PC-3 (cell line): ENCODE measurements at regions of chr16 and their contacts with region 1.

Region 1: DNA sequence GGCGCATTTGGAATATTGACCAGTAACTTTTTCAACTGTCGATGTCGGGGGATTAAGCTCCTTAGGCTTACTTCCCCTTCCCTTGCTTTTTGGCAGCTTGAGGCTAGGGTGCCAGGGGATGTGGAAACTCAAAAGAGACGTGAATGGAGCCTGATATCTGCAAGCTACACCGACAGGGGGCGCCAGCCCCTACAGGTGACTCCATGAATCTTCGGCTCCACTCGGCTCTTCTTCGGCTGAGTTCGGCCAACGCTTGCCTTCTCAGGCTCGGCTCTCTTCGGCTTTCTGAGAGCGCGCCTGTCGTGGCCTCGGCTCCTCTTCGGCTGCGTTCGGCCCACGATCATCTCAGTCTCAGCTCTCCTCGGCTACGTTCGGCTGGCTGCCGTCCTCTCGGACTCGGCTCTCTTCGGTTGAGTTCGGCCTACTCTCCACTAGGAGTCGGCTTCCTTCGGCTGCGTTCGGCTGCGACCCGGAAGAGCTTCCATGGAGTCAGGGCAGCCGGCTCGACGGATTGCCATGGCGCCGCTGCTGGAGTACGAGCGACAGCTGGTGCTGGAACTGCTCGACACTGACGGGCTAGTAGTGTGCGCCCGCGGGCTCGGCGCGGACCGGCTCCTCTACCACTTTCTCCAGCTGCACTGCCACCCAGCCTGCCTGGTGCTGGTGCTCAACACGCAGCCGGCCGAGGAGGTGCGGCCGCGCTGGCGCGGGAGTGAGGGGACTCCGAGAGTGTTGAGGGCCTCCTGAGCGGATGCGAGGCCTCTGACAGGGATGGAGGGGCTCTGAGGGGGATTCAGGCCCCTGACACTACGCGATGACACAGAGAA is at the start of gene ERCC4:
- DNase-seq: peak; percentile 98
- ATAC-seq: peak; percentile 99
- H3K4me3 ChIP-seq: peak within 1 kb of the TSS; percentile 99
- H3K27ac ChIP-seq: no peak within 1 kb of the TSS
- H3K4me1 ChIP-seq: peaks cover 10% of the 10 kb centered on the region; the same call in 1 of the 2 replicates
- H3K27me3 ChIP-seq: no peaks in the 10 kb centered on the region
- CTCF ChIP-seq: peak; percentile 70
- total RNA-seq, gene ERCC4: 3.2 and 4.9 TPM in 2 replicates

Region 2: DNA sequence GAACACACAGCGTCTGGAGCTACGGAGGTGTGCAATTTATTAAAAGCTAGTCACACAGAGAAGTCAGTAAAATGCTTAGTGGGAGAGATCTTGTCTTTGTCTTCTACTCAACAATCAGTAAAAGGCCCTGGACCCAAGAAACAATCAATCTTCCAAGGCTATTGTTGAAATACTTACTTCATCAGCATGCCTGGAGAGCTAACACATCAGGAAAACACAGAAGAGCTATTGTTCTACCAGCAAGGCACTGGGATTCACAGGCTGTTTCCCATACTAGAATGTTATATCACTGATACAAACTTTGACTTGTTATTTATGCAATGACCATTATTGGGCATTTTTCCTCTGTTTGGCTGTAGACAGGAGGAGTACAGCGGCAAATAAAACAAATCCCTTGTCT is 247.7 kb before region 1 on chr16:
- CTCF ChIA-PET with region 1: no interaction called
- POLR2A ChIA-PET with region 1: no interaction called
- intact Hi-C with region 1: no loop called
- DNase-seq: no peak
- ATAC-seq: no peak
- H3K4me3 ChIP-seq: no peak overlapping the region
- H3K27ac ChIP-seq: no peak overlapping the region
- H3K4me1 ChIP-seq: no peaks in the 10 kb centered on the region
- H3K27me3 ChIP-seq: no peaks in the 10 kb centered on the region
- CTCF ChIP-seq: no peak

Region 3: DNA sequence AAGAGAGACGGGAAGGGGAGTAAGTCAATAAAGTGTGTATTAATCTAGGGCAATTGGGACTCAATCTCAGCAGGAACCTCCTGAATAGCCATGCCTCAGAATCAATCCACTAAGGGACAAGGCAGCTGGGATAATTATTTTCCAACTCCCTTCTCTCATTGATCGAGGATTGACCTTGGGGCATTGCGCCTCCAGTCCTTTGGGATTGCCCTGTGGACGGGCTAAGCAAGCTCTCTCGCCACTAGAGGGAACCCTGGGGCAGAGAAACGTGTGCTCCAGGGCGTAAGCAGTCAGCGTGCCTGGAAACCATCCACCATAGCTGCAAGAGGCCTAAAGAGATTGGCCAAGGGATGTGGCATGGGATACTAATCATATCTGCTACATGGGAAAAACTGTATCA is 53.8 kb before region 1 on chr16:
- CTCF ChIA-PET with region 1: interaction called, 7 read pairs
- POLR2A ChIA-PET with region 1: no interaction called
- intact Hi-C with region 1: loop called (anchors 2 kb)
- DNase-seq: peak; percentile 76
- ATAC-seq: peak; percentile 89
- H3K4me3 ChIP-seq: no peak overlapping the region
- H3K27ac ChIP-seq: no peak overlapping the region
- H3K4me1 ChIP-seq: no peaks in the 10 kb centered on the region
- H3K27me3 ChIP-seq: peaks cover 3% of the 10 kb centered on the region; the same call in 1 of the 2 replicates
- CTCF ChIP-seq: peak; percentile 68

Region 4: DNA sequence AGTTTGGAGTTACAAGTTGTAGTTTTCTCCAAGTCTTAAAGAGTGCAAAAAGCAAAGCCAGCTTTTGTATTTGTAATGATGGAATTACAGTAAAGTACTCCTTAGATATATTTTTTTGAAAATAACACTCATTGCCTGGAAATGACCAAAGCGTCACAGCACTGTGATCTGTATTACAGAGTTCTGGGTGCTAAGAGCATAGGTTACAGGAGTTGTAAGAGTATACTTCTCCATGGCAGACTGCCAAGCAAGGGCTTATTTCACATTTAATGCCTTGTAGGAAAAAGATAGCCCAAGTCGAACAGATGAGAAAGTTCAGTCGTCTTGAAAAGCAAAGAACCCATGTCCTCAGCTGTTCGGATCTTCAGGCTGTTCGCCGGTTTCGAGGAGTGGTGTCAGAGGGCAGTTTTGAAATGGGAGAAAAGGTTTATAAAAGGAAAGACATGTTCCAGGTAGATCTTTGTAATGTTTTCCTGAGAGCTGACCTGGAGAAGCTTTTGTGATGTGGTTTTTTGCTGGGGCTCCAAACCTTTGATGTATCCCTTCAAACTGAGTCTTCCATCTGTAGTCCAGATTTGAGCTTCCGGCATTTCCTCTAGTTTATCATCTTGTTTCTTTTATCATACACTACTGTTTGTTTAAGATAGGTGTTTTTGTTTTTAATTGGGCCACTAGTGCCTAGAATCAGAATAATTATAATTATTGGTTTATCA is 41.4 kb after region 1 on chr16:
- CTCF ChIA-PET with region 1: no interaction called
- POLR2A ChIA-PET with region 1: no interaction called
- intact Hi-C with region 1: no loop called
- DNase-seq: no peak
- ATAC-seq: no peak
- H3K4me3 ChIP-seq: no peak overlapping the region
- H3K27ac ChIP-seq: no peak overlapping the region
- H3K4me1 ChIP-seq: peaks cover 25% of the 10 kb centered on the region
- H3K27me3 ChIP-seq: no peaks in the 10 kb centered on the region
- CTCF ChIP-seq: no peak

Region 5: DNA sequence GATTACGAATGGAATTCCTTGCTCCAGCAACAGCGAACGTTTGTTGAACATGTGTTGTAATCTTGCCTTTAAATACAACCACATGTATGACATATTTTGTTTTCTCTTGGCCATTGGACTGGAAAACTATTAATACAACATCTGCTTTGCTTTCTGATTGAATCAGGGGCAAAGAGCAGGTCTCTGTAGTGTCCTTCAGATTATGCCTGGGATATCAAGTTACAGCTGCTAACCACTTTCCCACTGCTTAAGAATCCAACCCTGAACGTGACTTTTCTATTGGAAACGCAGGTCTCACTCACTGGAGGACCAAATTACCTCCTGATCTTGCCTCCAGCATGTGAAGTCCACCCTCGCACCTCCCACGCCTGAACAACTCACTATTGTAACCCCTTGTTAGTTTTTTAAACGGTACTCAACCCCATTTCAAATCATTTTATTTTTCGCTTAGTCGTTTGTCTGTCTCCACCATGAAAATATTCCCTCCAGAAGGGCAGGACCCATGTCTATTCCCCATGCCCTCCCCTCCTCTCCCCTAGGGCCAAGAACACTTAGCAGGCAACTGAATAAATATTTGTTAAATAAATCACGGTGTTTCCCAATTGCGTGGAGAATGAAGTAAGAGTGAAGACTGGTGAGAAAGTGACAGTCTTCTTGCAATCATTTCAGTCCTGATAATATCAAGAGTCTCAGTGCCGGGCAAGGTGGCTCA is 93.8 kb after region 1 on chr16:
- CTCF ChIA-PET with region 1: no interaction called
- POLR2A ChIA-PET with region 1: no interaction called
- intact Hi-C with region 1: loop called (anchors 10 kb)
- DNase-seq: peak; percentile 62
- ATAC-seq: peak; percentile 40
- H3K4me3 ChIP-seq: no peak overlapping the region
- H3K27ac ChIP-seq: peak overlapping the region; percentile 68
- H3K4me1 ChIP-seq: peaks cover 14% of the 10 kb centered on the region
- H3K27me3 ChIP-seq: no peaks in the 10 kb centered on the region
- CTCF ChIP-seq: no peak

Region 6: GRCh38 chr16:14029658-14030057 is 109.8 kb after region 1 on chr16:
- CTCF ChIA-PET with region 1: no interaction called
- POLR2A ChIA-PET with region 1: no interaction called
- intact Hi-C with region 1: no loop called
- DNase-seq: no peak
- ATAC-seq: no peak
- H3K4me3 ChIP-seq: no peak overlapping the region
- H3K27ac ChIP-seq: no peak overlapping the region
- H3K4me1 ChIP-seq: no peaks in the 10 kb centered on the region
- H3K27me3 ChIP-seq: no peaks in the 10 kb centered on the region
- CTCF ChIP-seq: no peak

Region 7: DNA sequence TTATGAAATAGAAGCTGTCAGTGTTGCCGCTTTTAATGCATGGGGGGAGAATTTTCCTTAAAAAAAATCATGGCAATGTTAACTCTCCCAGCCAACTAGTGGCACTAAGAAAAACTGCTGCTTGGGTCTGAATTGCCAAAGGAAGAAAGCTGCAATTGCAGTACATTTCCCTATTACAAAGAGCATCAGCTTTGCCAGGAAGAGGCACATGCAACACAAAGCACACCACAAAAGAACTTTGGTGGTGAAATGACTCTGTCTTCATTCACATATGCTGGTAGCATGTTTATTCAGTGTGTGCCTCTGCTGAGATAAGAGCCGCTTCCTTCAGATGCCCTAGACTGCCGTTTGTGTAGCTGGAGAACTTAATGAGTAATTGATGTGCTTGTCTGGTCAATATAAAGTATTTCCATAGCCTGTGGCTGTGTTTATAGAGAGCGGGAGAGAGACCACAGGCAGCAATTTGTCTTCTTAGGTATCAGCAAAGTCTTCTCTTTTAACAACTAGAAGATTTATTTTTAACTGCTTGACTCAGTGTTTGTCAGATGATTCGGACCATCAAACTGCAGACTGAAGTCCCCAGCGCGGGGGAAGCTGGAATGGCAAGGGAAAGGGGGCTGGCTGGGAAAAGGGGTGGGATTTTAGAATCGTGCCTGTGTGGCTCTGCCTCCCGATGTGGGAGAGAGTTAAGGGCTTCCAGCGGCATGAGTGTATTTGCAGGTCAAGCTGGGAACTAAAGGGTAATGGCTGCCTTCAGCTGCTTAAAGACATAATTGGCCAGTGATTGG is 266.3 kb after region 1 on chr16:
- CTCF ChIA-PET with region 1: interaction called, 3 read pairs
- POLR2A ChIA-PET with region 1: no interaction called
- intact Hi-C with region 1: loop called (anchors 5 kb)
- DNase-seq: peak; percentile 46
- ATAC-seq: peak; percentile 21; the same call in 1 of the 2 replicates
- H3K4me3 ChIP-seq: no peak overlapping the region
- H3K27ac ChIP-seq: peak overlapping the region; percentile 24
- H3K4me1 ChIP-seq: peaks cover 30% of the 10 kb centered on the region
- H3K27me3 ChIP-seq: no peaks in the 10 kb centered on the region
- CTCF ChIP-seq: peak; percentile 53; the same call in 1 of the 2 replicates

Region 8: GRCh38 chr16:14249291-14250032 is 329.6 kb after region 1 on chr16:
- CTCF ChIA-PET with region 1: no interaction called
- POLR2A ChIA-PET with region 1: no interaction called
- intact Hi-C with region 1: loop called (anchors 5 kb)
- DNase-seq: peak; percentile 54
- ATAC-seq: no peak
- H3K4me3 ChIP-seq: no peak overlapping the region
- H3K27ac ChIP-seq: no peak overlapping the region
- H3K4me1 ChIP-seq: no peaks in the 10 kb centered on the region
- H3K27me3 ChIP-seq: no peaks in the 10 kb centered on the region
- CTCF ChIP-seq: peak; percentile 85

Region 9: GRCh38 chr16:14529010-14529669 is 609.2 kb after region 1 on chr16:
- CTCF ChIA-PET with region 1: no interaction called
- POLR2A ChIA-PET with region 1: no interaction called
- intact Hi-C with region 1: loop called (anchors 1 kb)
- DNase-seq: peak; percentile 80
- ATAC-seq: peak; percentile 84
- H3K4me3 ChIP-seq: no peak overlapping the region; the same call in 1 of the 2 replicates
- H3K27ac ChIP-seq: peak overlapping the region; percentile 37
- H3K4me1 ChIP-seq: peaks cover 12% of the 10 kb centered on the region
- H3K27me3 ChIP-seq: no peaks in the 10 kb centered on the region
- CTCF ChIP-seq: peak; percentile 82